Ovary (tissue), 10 donors: ENCODE measurements at regions of chr12 and their contacts with region 1.

Region 1: DNA sequence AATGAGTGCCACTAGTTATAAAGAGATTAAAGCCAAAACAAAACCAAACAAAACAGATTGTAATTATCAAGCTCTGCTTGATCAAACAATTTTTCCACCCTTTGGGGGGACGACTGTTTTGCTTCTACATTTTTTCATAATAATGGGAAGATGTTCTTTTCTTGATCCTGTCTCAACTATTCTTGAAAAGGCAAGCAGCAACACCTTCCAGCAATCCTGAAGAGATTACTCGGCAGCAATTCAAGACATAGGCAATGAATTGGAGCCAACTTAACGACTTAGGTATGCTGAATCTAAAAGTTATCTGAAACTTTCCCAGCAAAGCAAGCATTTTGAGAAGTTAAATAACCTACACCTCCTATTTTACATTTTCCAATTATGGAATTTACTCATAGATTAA is 69.9 kb upstream of the SLC38A4 start:
- DNase-seq: no peak
- H3K4me3 ChIP-seq: no peak overlapping the region
- H3K27ac ChIP-seq: no peak overlapping the region
- H3K4me1 ChIP-seq: no peaks in the 10 kb centered on the region
- H3K27me3 ChIP-seq: no peaks in the 10 kb centered on the region
- CTCF ChIP-seq: no peak
- EP300 ChIP-seq: no peak
- POLR2A ChIP-seq: no peak

Region 2: DNA sequence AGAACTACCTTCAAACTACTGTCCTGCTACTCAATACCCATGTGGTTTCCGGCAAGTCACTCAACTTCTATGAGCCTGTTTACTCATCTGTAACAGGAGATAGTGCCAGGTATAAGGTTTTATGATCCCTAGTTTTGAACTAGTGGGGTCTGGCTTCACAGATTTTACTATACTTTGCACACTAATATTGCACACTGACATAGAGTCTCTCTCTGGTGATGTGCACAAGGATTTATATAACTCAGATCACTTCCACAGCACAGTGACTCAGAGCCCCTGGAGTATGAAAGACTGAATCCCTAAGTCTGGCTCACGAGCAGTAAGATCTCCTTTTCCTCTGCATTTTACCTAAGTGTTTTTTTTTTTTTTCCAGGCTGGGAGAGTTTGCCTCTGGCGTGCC is 453.5 kb before region 1 on chr12:
- intact Hi-C with region 1: no loop called
- DNase-seq: no peak
- H3K4me3 ChIP-seq: no peak overlapping the region
- H3K27ac ChIP-seq: no peak overlapping the region
- H3K4me1 ChIP-seq: peaks cover 5% of the 10 kb centered on the region
- H3K27me3 ChIP-seq: no peaks in the 10 kb centered on the region
- CTCF ChIP-seq: no peak
- EP300 ChIP-seq: no peak
- POLR2A ChIP-seq: no peak

Region 3: DNA sequence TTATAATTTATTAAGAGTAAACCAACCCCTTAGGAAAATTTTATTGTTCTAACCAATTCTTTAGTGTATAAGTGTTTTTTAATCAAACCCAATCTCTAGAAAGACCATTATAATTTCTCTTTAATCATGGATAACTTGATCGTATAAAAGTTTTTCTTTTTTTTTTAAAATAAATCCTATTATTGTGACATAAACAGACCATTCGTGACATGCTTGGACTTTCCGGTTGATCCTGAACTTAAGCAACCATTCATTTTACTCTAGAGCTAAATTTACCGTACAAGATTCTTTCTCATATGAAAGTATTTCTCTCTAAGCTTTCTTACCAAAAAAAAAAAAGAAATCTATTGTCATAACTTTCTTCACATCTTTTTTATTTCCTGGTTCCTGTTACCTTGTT is 37.4 kb before region 1 on chr12:
- intact Hi-C with region 1: loop called in 1 of 4 experiments (anchors 2 kb)
- DNase-seq: no peak
- H3K4me3 ChIP-seq: no peak overlapping the region
- H3K27ac ChIP-seq: no peak overlapping the region
- H3K4me1 ChIP-seq: peaks cover 1% of the 10 kb centered on the region
- H3K27me3 ChIP-seq: no peaks in the 10 kb centered on the region
- CTCF ChIP-seq: no peak
- EP300 ChIP-seq: no peak
- POLR2A ChIP-seq: no peak

Region 4: GRCh38 chr12:46915836-46916235 is 20.1 kb after region 1 on chr12:
- intact Hi-C with region 1: loop called in 1 of 4 experiments (anchors 2 kb)
- DNase-seq: no peak
- H3K4me3 ChIP-seq: no peak overlapping the region
- H3K27ac ChIP-seq: no peak overlapping the region
- H3K4me1 ChIP-seq: no peaks in the 10 kb centered on the region
- H3K27me3 ChIP-seq: no peaks in the 10 kb centered on the region
- CTCF ChIP-seq: no peak
- EP300 ChIP-seq: no peak
- POLR2A ChIP-seq: no peak